ENCODE measurements at regions of chr18 and their contacts with region 1.

Region 1: GRCh38 chr18:2692508-2692907 is 37.0 kb downstream of the SMCHD1 start:
- DNase-seq: no peak
- H3K4me3 ChIP-seq: no peak overlapping the region
- H3K4me3 Mint-ChIP-seq: peak overlapping the region in 1 of 8 donors; percentile 7
- H3K27ac ChIP-seq: no peak overlapping the region
- H3K27ac Mint-ChIP-seq: peak overlapping the region in 5 of 7 donors; percentile 8 to 54 (median 33)
- H3K4me1 ChIP-seq: peaks cover 21% of the 10 kb centered on the region
- H3K4me1 Mint-ChIP-seq: peaks cover 28 to 49% (median 38%) of the 10 kb centered on the region in 4 donors
- H3K27me3 ChIP-seq: no peaks in the 10 kb centered on the region
- H3K27me3 Mint-ChIP-seq: no peaks in the 10 kb centered on the region

Region 2: DNA sequence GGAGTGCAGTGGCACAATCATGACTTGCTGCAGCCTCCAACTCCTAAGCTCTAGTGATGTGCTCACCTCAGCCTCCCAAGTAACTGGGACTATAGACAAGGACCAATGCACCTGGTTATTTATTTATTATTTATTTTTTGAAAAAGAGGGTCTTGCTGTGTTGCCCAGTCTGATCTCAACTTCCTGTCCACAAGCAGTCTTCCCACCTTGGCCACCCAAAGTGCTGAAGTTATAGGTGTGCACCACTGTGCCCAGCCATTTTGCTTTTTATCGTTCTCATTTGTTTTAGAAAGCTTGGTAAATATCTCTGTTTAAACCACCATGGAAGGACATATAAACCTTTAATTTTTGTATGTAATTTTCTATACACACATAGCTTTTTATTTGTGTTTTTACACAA is 37.2 kb after region 1 on chr18:
- CTCF ChIA-PET with region 1: no interaction called
- POLR2A ChIA-PET with region 1: no interaction called
- intact Hi-C with region 1: loop called (anchors 5 kb)
- DNase-seq: no peak
- H3K4me3 ChIP-seq: no peak overlapping the region
- H3K4me3 Mint-ChIP-seq: no peak overlapping the region
- H3K27ac ChIP-seq: no peak overlapping the region
- H3K27ac Mint-ChIP-seq: no peak overlapping the region
- H3K4me1 ChIP-seq: no peaks in the 10 kb centered on the region
- H3K4me1 Mint-ChIP-seq: peaks cover 13 to 21% (median 19%) of the 10 kb centered on the region in 4 donors
- H3K27me3 ChIP-seq: no peaks in the 10 kb centered on the region
- H3K27me3 Mint-ChIP-seq: no peaks in the 10 kb centered on the region

Measured in CD4-positive, alpha-beta memory T cell (primary cell).